GM12878 (cell line): ENCODE measurements at regions of chr10 and their contacts with region 1.

Region 1: GRCh38 chr10:34473567-34474391 is 341.3 kb downstream of the PARD3 start:
- DNase-seq: no peak
- ATAC-seq: peak; percentile 24
- H3K4me3 ChIP-seq: no peak overlapping the region
- H3K27ac ChIP-seq: no peak overlapping the region
- H3K4me1 ChIP-seq: no peaks in the 10 kb centered on the region
- H3K27me3 ChIP-seq: no peaks in the 10 kb centered on the region
- CTCF ChIP-seq: no peak
- EP300 ChIP-seq: no peak
- POLR2A ChIP-seq: no peak
- RAD21 ChIP-seq: no peak

Region 2: DNA sequence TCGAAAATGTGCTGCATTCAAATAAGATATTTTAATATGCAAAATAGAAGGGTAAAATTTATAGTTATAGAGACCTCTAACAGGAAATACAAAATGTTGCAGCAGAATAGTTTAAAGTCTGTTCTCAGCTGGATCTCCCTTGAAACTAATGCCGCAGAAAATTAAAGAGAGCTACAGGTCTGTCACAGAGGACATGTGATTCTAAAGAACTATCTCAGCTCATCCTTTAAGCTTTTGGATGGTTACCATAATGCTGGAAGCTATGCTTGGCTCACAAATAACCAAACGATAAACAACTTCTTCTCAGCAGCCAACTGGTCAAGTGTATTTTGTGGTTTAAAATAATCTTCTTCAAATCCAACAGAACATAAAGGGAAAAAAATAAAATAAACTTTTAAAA is 11.7 kb before region 1 on chr10:
- CTCF ChIA-PET with region 1: interaction called, 4 read pairs
- POLR2A ChIA-PET with region 1: no interaction called
- RAD21 ChIA-PET with region 1: no interaction called
- SMC1A ChIA-PET with region 1: interaction called, 10 read pairs
- in situ Hi-C with region 1: no loop called
- intact Hi-C with region 1: no loop called
- DNase-seq: no peak
- ATAC-seq: no peak
- H3K4me3 ChIP-seq: no peak overlapping the region
- H3K27ac ChIP-seq: no peak overlapping the region
- H3K4me1 ChIP-seq: no peaks in the 10 kb centered on the region
- H3K27me3 ChIP-seq: no peaks in the 10 kb centered on the region
- CTCF ChIP-seq: no peak
- EP300 ChIP-seq: no peak
- POLR2A ChIP-seq: no peak
- RAD21 ChIP-seq: no peak

Region 3: GRCh38 chr10:34489973-34490745 is 16.4 kb after region 1 on chr10:
- CTCF ChIA-PET with region 1: interaction called, 4 read pairs
- POLR2A ChIA-PET with region 1: interaction called, 3 read pairs
- RAD21 ChIA-PET with region 1: no interaction called
- SMC1A ChIA-PET with region 1: interaction called, 15 read pairs
- in situ Hi-C with region 1: no loop called
- intact Hi-C with region 1: no loop called
- DNase-seq: no peak
- ATAC-seq: peak; percentile 66
- H3K4me3 ChIP-seq: no peak overlapping the region
- H3K27ac ChIP-seq: no peak overlapping the region
- H3K4me1 ChIP-seq: no peaks in the 10 kb centered on the region
- H3K27me3 ChIP-seq: no peaks in the 10 kb centered on the region
- CTCF ChIP-seq: no peak
- EP300 ChIP-seq: no peak
- POLR2A ChIP-seq: no peak
- RAD21 ChIP-seq: no peak

Region 4: GRCh38 chr10:34498821-34499220 is 25.0 kb after region 1 on chr10:
- CTCF ChIA-PET with region 1: interaction called, 3 read pairs
- POLR2A ChIA-PET with region 1: no interaction called
- RAD21 ChIA-PET with region 1: no interaction called
- SMC1A ChIA-PET with region 1: interaction called, 6 read pairs
- in situ Hi-C with region 1: no loop called
- intact Hi-C with region 1: loop called (anchors 1 kb)
- DNase-seq: no peak
- ATAC-seq: no peak
- H3K4me3 ChIP-seq: no peak overlapping the region
- H3K27ac ChIP-seq: no peak overlapping the region
- H3K4me1 ChIP-seq: no peaks in the 10 kb centered on the region
- H3K27me3 ChIP-seq: no peaks in the 10 kb centered on the region
- CTCF ChIP-seq: no peak
- EP300 ChIP-seq: no peak
- POLR2A ChIP-seq: no peak
- RAD21 ChIP-seq: no peak